ENCODE measurements at regions of chr4 and their contacts with region 1.

Region 1: DNA sequence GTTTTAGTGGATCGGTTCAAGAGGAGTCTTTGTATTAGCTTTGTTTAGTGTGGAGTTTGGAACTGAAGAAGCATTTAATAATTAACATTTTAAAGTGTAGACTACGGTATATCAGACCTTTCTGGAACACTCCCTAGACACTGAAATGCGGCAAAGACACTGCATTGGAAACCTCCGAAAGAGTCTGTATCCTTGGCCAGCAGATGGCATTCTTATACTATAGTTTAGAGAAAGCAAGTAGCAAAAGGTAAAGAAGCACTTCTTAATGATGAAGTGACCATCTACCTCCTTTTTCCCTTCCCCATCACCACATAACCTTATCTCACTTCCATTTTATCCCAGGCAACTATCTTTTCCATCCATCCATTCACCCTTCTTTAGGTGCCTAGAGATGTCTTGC is 7.6 kb downstream of the FABP2 start:
- DNase-seq: peak in 5 of 9 experiments; percentile 21 to 68 (median 35)
- ATAC-seq: peak; percentile 82
- H3K4me3 ChIP-seq: no peak overlapping the region
- H3K4me3 Mint-ChIP-seq: no peak overlapping the region
- H3K27ac ChIP-seq: no peak overlapping the region
- H3K27ac Mint-ChIP-seq: no peak overlapping the region
- H3K4me1 ChIP-seq: no peaks in the 10 kb centered on the region
- H3K4me1 Mint-ChIP-seq: no peaks in the 10 kb centered on the region
- H3K27me3 ChIP-seq: no peaks in the 10 kb centered on the region
- H3K27me3 Mint-ChIP-seq: peaks cover 8% of the 10 kb centered on the region
- CTCF ChIP-seq: peak; percentile 60

Region 2: GRCh38 chr4:119490335-119490734 is 176.0 kb after region 1 on chr4:
- CTCF ChIA-PET with region 1: interaction called, 3 read pairs
- POLR2A ChIA-PET with region 1: no interaction called
- intact Hi-C with region 1: loop called in 1 of 2 experiments (anchors 1 kb)
- DNase-seq: peak in 1 of 9 experiments; percentile 8
- ATAC-seq: no peak
- H3K4me3 ChIP-seq: no peak overlapping the region
- H3K4me3 Mint-ChIP-seq: no peak overlapping the region
- H3K27ac ChIP-seq: no peak overlapping the region
- H3K27ac Mint-ChIP-seq: no peak overlapping the region
- H3K4me1 ChIP-seq: no peaks in the 10 kb centered on the region
- H3K4me1 Mint-ChIP-seq: no peaks in the 10 kb centered on the region
- H3K27me3 ChIP-seq: no peaks in the 10 kb centered on the region
- H3K27me3 Mint-ChIP-seq: no peaks in the 10 kb centered on the region
- CTCF ChIP-seq: no peak

Region 3: DNA sequence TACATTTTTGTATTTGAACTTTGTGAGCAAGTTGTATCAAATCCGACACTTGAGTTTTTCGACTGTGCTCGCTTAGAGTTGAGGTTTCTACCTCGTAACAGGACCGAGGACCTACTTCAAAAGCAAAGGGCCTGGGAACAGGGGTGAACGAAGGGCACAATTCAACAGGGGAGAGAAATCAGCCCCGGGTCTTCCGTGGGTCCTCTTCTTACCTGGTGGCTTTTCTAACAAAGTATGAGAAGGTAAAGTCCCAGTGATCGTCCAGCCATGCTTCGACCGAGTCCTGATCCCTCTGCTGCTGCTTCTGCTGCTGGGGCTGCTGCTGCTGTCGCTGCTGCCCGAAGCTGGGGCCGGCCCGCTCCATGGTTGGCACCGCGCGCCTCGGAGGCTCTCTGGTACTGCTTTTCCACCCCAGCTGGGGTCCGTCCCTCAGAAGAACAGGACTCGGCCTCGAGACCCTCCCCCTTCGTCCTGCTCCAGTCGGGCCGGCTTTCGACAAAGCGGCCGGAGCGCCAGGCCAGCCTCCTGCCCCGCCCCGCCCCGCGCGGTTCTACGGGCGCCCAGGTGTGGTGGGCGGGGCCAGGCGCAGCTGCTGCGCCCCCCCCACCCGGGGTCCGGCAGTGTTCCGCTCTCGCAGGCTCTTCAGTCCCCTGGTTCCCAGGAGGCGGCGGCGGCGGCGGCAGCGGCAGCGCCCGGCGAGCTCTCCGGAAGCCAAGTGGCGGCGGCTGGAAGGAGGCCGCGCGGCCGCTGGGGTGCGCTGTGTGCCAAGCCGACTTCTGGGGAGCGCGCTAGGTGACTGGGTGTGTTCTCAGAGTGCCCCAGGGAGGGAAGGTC is 314.2 kb after region 1 on chr4 and contains the start of gene PDE5A:
- CTCF ChIA-PET with region 1: interaction called, 5 read pairs
- POLR2A ChIA-PET with region 1: no interaction called
- intact Hi-C with region 1: loop called (anchors 1 to 5 kb)
- DNase-seq: peak; percentile 52 to 85 (median 76)
- ATAC-seq: peak; percentile 76
- H3K4me3 ChIP-seq: peak within 1 kb of the TSS; percentile 73 to 78
- H3K4me3 Mint-ChIP-seq: peak within 1 kb of the TSS; percentile 88
- H3K27ac ChIP-seq: peak within 1 kb of the TSS in 1 of 2 experiments; percentile 50
- H3K27ac Mint-ChIP-seq: peak within 1 kb of the TSS; percentile 71
- H3K4me1 ChIP-seq: peaks cover 9% of the 10 kb centered on the region
- H3K4me1 Mint-ChIP-seq: peaks cover 23% of the 10 kb centered on the region
- H3K27me3 ChIP-seq: no peaks in the 10 kb centered on the region
- H3K27me3 Mint-ChIP-seq: peaks cover 7% of the 10 kb centered on the region
- CTCF ChIP-seq: peak; percentile 74
- total RNA-seq, gene PDE5A: 0.11 to 0.25 TPM

Region 4: DNA sequence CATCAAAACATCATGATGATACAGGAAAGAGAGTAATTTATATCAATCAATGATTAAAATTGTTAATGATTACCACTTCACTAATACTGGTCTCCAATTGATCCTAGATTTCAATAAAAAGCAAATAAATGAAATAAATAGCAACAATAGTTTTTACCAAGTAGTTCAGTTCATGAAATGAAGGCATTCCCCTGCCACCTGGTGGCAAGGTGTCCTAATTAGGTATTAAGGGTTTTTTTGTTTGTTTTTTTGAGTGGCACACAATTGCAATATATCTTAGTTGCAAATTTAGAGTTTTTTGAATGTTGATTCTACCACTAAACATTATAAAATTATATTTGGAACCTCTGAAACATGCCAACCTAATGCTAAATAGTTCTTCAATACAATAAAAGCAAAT is 471.6 kb after region 1 on chr4:
- CTCF ChIA-PET with region 1: no interaction called
- POLR2A ChIA-PET with region 1: no interaction called
- intact Hi-C with region 1: loop called in 1 of 2 experiments (anchors 5 kb)
- DNase-seq: peak in 2 of 9 experiments; percentile 1 to 3
- ATAC-seq: no peak
- H3K4me3 ChIP-seq: no peak overlapping the region
- H3K4me3 Mint-ChIP-seq: no peak overlapping the region
- H3K27ac ChIP-seq: no peak overlapping the region
- H3K27ac Mint-ChIP-seq: no peak overlapping the region
- H3K4me1 ChIP-seq: no peaks in the 10 kb centered on the region
- H3K4me1 Mint-ChIP-seq: no peaks in the 10 kb centered on the region
- H3K27me3 ChIP-seq: no peaks in the 10 kb centered on the region
- H3K27me3 Mint-ChIP-seq: peaks cover 4% of the 10 kb centered on the region
- CTCF ChIP-seq: no peak

Region 5: GRCh38 chr4:119795986-119796578 is 481.7 kb after region 1 on chr4:
- CTCF ChIA-PET with region 1: no interaction called
- POLR2A ChIA-PET with region 1: no interaction called
- intact Hi-C with region 1: no loop called
- DNase-seq: no peak
- ATAC-seq: no peak
- H3K4me3 ChIP-seq: no peak overlapping the region
- H3K4me3 Mint-ChIP-seq: no peak overlapping the region
- H3K27ac ChIP-seq: no peak overlapping the region
- H3K27ac Mint-ChIP-seq: no peak overlapping the region
- H3K4me1 ChIP-seq: no peaks in the 10 kb centered on the region
- H3K4me1 Mint-ChIP-seq: no peaks in the 10 kb centered on the region
- H3K27me3 ChIP-seq: no peaks in the 10 kb centered on the region
- H3K27me3 Mint-ChIP-seq: no peaks in the 10 kb centered on the region
- CTCF ChIP-seq: no peak

Region 6: DNA sequence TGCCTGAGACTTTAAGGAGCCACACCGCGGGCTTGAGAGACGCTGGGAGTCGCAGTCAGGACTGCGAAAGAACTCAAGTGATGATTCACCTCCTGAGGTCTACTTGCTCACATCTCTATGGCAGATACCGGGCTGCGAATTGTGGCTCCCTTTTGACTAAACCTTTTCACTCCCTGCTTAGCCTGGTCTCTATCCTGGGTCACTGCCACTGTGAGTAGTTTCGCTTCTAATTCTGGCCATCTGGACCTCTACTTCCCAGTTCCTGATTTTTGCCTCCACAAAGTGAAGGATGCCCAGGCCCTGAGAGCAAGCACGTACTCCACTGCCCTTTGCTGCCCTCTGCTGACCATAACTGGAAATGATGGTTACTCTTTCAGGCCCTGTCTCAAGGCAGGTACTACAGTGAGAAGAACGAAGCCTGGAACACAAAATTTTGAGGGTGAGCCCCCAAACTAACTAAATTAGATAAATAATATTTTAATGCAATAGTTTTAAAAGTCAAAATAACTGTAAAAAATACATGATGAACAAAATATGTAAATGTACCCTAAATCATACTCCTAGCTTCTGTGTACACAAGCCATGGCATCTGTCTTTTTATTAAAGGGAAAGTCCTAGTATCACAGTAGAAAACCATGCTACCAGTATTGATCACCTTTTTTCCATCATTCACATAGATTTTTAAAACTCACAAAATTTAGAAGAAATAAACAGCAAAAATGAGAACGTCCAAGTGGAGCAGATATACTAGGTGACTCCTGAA is 735.6 kb after region 1 on chr4:
- CTCF ChIA-PET with region 1: interaction called, 3 read pairs
- POLR2A ChIA-PET with region 1: no interaction called
- intact Hi-C with region 1: loop called (anchors 1 to 2 kb)
- DNase-seq: peak; percentile 46 to 80 (median 73)
- ATAC-seq: peak; percentile 98
- H3K4me3 ChIP-seq: no peak overlapping the region
- H3K4me3 Mint-ChIP-seq: peak overlapping the region; percentile 54
- H3K27ac ChIP-seq: no peak overlapping the region
- H3K27ac Mint-ChIP-seq: no peak overlapping the region
- H3K4me1 ChIP-seq: no peaks in the 10 kb centered on the region
- H3K4me1 Mint-ChIP-seq: peaks cover 2% of the 10 kb centered on the region
- H3K27me3 ChIP-seq: no peaks in the 10 kb centered on the region
- H3K27me3 Mint-ChIP-seq: no peaks in the 10 kb centered on the region
- CTCF ChIP-seq: peak; percentile 90

Measured in CD8-positive, alpha-beta T cell (primary cell).